Breast epithelium (tissue), 4 donors: ENCODE measurements at regions of chr1 and their contacts with region 1.

Region 1: DNA sequence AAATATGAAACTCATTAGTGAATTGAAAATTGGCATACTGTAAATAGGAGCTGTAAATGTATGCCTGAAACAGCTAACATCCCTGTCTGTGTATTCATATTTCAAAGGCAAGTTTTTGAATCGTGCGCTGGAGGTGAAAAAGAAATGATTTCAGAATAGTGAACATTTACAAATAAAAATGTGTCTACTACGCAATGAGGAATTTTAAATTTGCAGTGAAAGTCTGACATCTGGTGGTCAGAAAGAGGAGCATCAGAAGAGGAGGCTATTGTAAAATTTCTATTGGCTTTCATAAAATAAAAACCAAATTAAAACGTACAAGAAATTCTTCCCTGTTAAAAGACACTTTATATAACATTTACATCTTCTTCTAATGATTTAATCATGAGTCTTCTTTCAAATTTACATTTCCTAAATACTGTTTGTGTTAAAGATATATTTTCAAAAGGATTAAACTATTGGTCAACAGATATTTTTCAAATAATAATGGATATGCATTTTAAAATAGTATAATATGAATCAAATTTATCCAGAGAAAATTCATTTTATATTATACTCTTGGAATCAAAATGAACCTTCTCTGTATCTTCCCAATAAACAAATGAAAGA is 113.7 kb upstream of the RRP15 start:
- DNase-seq: no peak
- H3K4me3 ChIP-seq: no peak overlapping the region
- H3K27ac ChIP-seq: no peak overlapping the region
- H3K4me1 ChIP-seq: no peaks in the 10 kb centered on the region
- H3K27me3 ChIP-seq: peaks cover 0 to 26% of the 10 kb centered on the region in 2 donors
- CTCF ChIP-seq: peak; percentile 33 to 67 (median 63)
- POLR2A ChIP-seq: no peak

Region 2: GRCh38 chr1:217516262-217516661 is 655.1 kb before region 1 on chr1:
- intact Hi-C with region 1: loop called (anchors 10 kb)
- DNase-seq: no peak
- H3K4me3 ChIP-seq: no peak overlapping the region
- H3K27ac ChIP-seq: no peak overlapping the region
- H3K4me1 ChIP-seq: no peaks in the 10 kb centered on the region
- H3K27me3 ChIP-seq: no peaks in the 10 kb centered on the region
- CTCF ChIP-seq: no peak
- POLR2A ChIP-seq: no peak

Region 3: GRCh38 chr1:218488986-218489385 is 317.6 kb after region 1 on chr1:
- intact Hi-C with region 1: no loop called
- DNase-seq: peak in 1 of 2 donors; percentile 21
- H3K4me3 ChIP-seq: no peak overlapping the region
- H3K27ac ChIP-seq: no peak overlapping the region
- H3K4me1 ChIP-seq: no peaks in the 10 kb centered on the region
- H3K27me3 ChIP-seq: no peaks in the 10 kb centered on the region
- CTCF ChIP-seq: no peak
- POLR2A ChIP-seq: no peak